ENCODE measurements at regions of chr15 and their contacts with region 1.

Region 1: DNA sequence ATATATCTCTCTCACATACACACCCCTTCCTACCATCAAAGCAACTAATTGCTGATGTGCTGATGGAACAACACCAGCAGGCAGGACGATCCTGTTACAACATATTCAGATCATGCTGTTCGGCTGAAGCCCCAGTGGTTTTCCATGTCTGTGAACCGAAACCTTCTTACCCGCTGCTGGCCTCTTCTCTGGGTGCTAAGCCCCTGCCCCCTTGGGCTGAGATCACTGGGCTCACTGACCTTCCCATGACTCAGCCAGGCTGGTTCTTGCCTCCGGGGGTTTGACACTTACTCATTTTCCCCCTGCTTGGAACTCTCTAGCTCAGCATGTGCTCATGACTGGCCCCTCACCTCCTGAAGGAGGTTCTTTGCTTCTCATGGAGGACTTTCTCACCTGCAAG is 122.0 kb upstream of the RGMA start:
- DNase-seq: no peak
- H3K4me3 ChIP-seq: no peak overlapping the region
- H3K27ac ChIP-seq: no peak overlapping the region
- H3K4me1 ChIP-seq: no peaks in the 10 kb centered on the region
- H3K27me3 ChIP-seq: peaks cover 58% of the 10 kb centered on the region
- CTCF ChIP-seq: no peak

Region 2: GRCh38 chr15:92625251-92625980 is 585.6 kb before region 1 on chr15:
- CTCF ChIA-PET with region 1: no interaction called
- POLR2A ChIA-PET with region 1: no interaction called
- intact Hi-C with region 1: no loop called
- DNase-seq: peak in 1 of 2 experiments; percentile 69
- H3K4me3 ChIP-seq: no peak overlapping the region
- H3K27ac ChIP-seq: peak overlapping the region; percentile 50
- H3K4me1 ChIP-seq: peaks cover 10% of the 10 kb centered on the region
- H3K27me3 ChIP-seq: no peaks in the 10 kb centered on the region
- CTCF ChIP-seq: no peak

Region 3: DNA sequence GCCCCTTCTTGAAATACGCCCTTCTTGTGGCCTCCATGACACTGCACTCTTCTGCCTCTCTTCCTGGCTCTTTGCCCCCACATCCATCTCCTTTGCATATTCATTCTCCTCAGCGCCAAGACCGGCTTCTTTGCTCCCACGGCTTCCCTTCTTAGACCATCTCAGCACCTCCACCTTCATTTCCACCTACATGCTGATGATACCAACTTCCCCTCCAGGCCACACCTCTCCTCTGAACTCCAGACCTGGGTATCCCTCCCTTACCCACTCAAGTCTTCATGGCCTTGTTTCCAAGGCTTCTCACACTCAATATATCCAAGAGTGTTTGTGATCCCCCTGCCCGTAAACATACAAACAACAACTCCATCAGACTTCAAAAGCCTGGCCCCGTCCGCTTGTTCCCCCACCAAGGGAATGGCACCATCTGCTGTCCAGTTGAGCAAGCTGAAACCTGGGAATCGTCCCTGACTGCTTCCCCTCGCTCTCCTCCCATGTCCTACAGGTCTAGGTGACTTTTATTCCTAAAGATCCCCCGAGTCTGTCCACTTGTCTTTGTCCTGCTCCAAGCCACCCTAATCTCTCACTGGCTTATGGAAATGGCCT is 527.7 kb before region 1 on chr15:
- CTCF ChIA-PET with region 1: no interaction called
- POLR2A ChIA-PET with region 1: interaction called, 15 read pairs
- intact Hi-C with region 1: no loop called
- DNase-seq: no peak
- H3K4me3 ChIP-seq: no peak overlapping the region
- H3K27ac ChIP-seq: no peak overlapping the region
- H3K4me1 ChIP-seq: peaks cover 24% of the 10 kb centered on the region
- H3K27me3 ChIP-seq: no peaks in the 10 kb centered on the region
- CTCF ChIP-seq: peak; percentile 40; the same call in 1 of the 2 replicates

Region 4: GRCh38 chr15:93253681-93254080 is 42.7 kb after region 1 on chr15:
- CTCF ChIA-PET with region 1: no interaction called
- POLR2A ChIA-PET with region 1: no interaction called
- intact Hi-C with region 1: no loop called
- DNase-seq: no peak
- H3K4me3 ChIP-seq: no peak overlapping the region
- H3K27ac ChIP-seq: no peak overlapping the region
- H3K4me1 ChIP-seq: no peaks in the 10 kb centered on the region
- H3K27me3 ChIP-seq: peaks cover 91% of the 10 kb centered on the region
- CTCF ChIP-seq: no peak

Region 5: GRCh38 chr15:93852761-93853160 is 641.8 kb after region 1 on chr15:
- CTCF ChIA-PET with region 1: no interaction called
- POLR2A ChIA-PET with region 1: no interaction called
- intact Hi-C with region 1: no loop called
- DNase-seq: no peak
- H3K4me3 ChIP-seq: no peak overlapping the region
- H3K27ac ChIP-seq: no peak overlapping the region
- H3K4me1 ChIP-seq: no peaks in the 10 kb centered on the region
- H3K27me3 ChIP-seq: no peaks in the 10 kb centered on the region; the same call in 1 of the 2 replicates
- CTCF ChIP-seq: no peak